ENCODE measurements at regions of chr1 and their contacts with region 1.

Region 1: GRCh38 chr1:107862064-107862463 is 102.9 kb downstream of the VAV3 start:
- DNase-seq: peak in 1 of 2 experiments; percentile 8
- H3K4me3 ChIP-seq: no peak overlapping the region
- H3K27ac ChIP-seq: no peak overlapping the region
- H3K4me1 ChIP-seq: no peaks in the 10 kb centered on the region
- H3K27me3 ChIP-seq: no peaks in the 10 kb centered on the region
- CTCF ChIP-seq: no peak

Region 2: DNA sequence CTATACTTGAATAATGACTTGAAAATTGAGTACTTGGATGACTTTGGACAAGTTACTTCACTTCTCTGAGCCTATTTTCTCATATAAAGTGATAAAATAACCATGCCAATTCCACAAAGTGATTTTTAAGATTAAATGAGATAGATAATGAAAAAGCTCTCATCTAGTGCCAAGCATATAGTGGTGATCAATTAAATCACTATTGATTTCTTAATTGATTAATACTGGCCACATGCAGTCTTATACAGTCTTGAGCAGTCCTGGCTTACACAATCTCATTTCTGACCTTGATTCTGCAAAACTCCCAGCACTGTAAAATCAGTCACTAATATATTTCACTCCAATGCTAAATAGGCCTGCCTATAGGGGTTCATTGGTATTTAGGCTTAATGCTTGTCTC is 45.8 kb before region 1 on chr1:
- CTCF ChIA-PET with region 1: no interaction called
- POLR2A ChIA-PET with region 1: no interaction called
- intact Hi-C with region 1: loop called (anchors 1 kb)
- DNase-seq: no peak
- H3K4me3 ChIP-seq: no peak overlapping the region
- H3K27ac ChIP-seq: no peak overlapping the region
- H3K4me1 ChIP-seq: 0 out of 2 replicates have a peak, but pooled peaks cover 3% of the 10 kb centered on the region
- H3K27me3 ChIP-seq: no peaks in the 10 kb centered on the region
- CTCF ChIP-seq: no peak

Region 3: GRCh38 chr1:107976836-107977235 is 114.8 kb after region 1 on chr1:
- CTCF ChIA-PET with region 1: no interaction called
- POLR2A ChIA-PET with region 1: no interaction called
- intact Hi-C with region 1: no loop called
- DNase-seq: no peak
- H3K4me3 ChIP-seq: no peak overlapping the region
- H3K27ac ChIP-seq: no peak overlapping the region
- H3K4me1 ChIP-seq: no peaks in the 10 kb centered on the region
- H3K27me3 ChIP-seq: no peaks in the 10 kb centered on the region
- CTCF ChIP-seq: no peak